Naive thymus-derived CD4-positive, alpha-beta T cell (primary cell): ENCODE measurements at regions of chr4 and their contacts with region 1.

Region 1: DNA sequence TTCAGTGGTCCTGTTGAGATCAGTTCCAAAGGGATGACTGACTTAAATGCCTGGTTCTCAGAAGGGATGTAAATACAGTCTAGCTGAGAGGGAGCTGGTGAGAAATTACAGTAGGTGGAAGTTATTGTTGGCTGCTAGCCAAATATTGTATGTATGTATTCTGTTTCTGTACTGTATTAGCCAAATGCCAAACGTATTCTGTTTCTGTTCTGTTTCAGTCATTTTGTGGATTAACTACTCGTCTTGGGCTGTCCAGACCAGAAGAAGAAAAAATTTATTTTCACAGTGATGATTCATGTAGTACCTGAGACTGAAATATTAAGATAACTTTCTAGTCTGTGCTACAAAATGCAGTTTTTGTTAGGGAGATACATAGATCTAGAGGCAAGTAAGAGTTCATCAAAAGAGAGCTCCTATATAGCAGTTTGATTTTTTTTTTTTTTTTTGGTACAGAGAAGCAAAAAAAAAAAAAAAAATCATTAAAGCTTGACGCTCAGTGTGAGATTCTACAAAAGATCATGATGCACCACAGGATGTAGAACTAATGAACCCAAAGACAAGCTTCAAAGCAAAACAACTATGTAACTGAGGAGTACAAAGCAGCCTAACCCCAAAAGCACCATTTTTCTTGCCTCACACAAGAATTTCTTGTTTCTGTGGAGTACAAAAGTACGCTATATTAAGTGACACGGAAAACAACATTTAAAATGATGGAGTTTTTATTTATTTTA is 54.8 kb downstream of the CASP6 start:
- DNase-seq: peak in 7 of 9 donors; percentile 69 to 91 (median 84)
- ATAC-seq: peak; percentile 96
- H3K4me3 ChIP-seq: peak overlapping the region; percentile 41
- H3K4me3 Mint-ChIP-seq: peak overlapping the region in 8 of 10 donors; percentile 59 to 88 (median 82)
- H3K27ac ChIP-seq: peak overlapping the region; percentile 81
- H3K27ac Mint-ChIP-seq: peak overlapping the region in 5 of 9 donors; percentile 92 to 100 (median 97)
- H3K4me1 ChIP-seq: peaks cover 68 to 70% of the 10 kb centered on the region in 2 donors
- H3K4me1 Mint-ChIP-seq: peaks cover 21 to 43% (median 34%) of the 10 kb centered on the region in 7 donors
- H3K27me3 ChIP-seq: no peaks in the 10 kb centered on the region
- H3K27me3 Mint-ChIP-seq: no peaks in the 10 kb centered on the region

Region 2: DNA sequence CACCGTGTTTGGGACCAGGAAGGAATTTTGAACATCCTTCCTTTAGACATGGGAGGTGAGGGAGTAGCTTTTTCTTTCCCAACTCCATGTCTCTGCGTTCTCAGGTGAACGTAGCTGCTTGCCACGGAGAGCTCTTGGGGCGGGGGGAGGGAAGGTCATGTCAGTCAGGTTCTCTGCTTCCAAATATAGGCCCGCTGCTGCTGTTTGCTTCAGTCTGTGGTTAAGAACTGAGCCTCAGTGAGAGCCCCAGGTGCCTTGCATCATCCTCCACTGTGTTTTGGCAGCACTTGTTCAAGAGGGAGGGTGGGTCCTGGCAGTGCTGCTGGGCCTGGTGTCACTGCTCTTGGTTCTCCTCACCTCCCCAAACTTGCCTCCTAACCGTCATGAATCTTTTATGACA is 1612.2 kb before region 1 on chr4:
- CTCF ChIA-PET with region 1: no interaction called
- POLR2A ChIA-PET with region 1: no interaction called
- intact Hi-C with region 1: loop called in 1 of 2 experiments (anchors 1 kb)
- DNase-seq: peak in 8 of 9 donors; percentile 43 to 93 (median 88)
- ATAC-seq: peak; percentile 99
- H3K4me3 ChIP-seq: peak overlapping the region; percentile 41
- H3K4me3 Mint-ChIP-seq: peak overlapping the region; percentile 73 to 87 (median 80)
- H3K27ac ChIP-seq: peak overlapping the region; percentile 78
- H3K27ac Mint-ChIP-seq: peak overlapping the region; percentile 90 to 100 (median 96)
- H3K4me1 ChIP-seq: peaks cover 0 to 55% of the 10 kb centered on the region in 2 donors
- H3K4me1 Mint-ChIP-seq: peaks cover 19 to 81% (median 66%) of the 10 kb centered on the region in 7 donors
- H3K27me3 ChIP-seq: no peaks in the 10 kb centered on the region
- H3K27me3 Mint-ChIP-seq: no peaks in the 10 kb centered on the region

Region 3: GRCh38 chr4:109611045-109611646 is 37.3 kb before region 1 on chr4:
- CTCF ChIA-PET with region 1: no interaction called
- POLR2A ChIA-PET with region 1: no interaction called
- intact Hi-C with region 1: loop called in 1 of 2 experiments (anchors 5 kb)
- DNase-seq: no peak
- ATAC-seq: no peak
- H3K4me3 ChIP-seq: no peak overlapping the region
- H3K4me3 Mint-ChIP-seq: peak overlapping the region in 2 of 10 donors; percentile 42 to 64
- H3K27ac ChIP-seq: no peak overlapping the region
- H3K27ac Mint-ChIP-seq: peak overlapping the region in 2 of 9 donors; percentile 21 to 36
- H3K4me1 ChIP-seq: peaks cover 0 to 12% of the 10 kb centered on the region in 2 donors
- H3K4me1 Mint-ChIP-seq: peaks cover 39 to 96% (median 84%) of the 10 kb centered on the region in 7 donors
- H3K27me3 ChIP-seq: no peaks in the 10 kb centered on the region
- H3K27me3 Mint-ChIP-seq: no peaks in the 10 kb centered on the region

Region 4: GRCh38 chr4:109631532-109632108 is 16.8 kb before region 1 on chr4:
- CTCF ChIA-PET with region 1: interaction called, 5 read pairs
- POLR2A ChIA-PET with region 1: interaction called, 10 read pairs
- intact Hi-C with region 1: loop called in 1 of 2 experiments (anchors 2 kb)
- DNase-seq: no peak
- ATAC-seq: peak; percentile 32
- H3K4me3 ChIP-seq: no peak overlapping the region
- H3K4me3 Mint-ChIP-seq: peak overlapping the region in 9 of 10 donors; percentile 18 to 82 (median 63)
- H3K27ac ChIP-seq: peak overlapping the region; percentile 20
- H3K27ac Mint-ChIP-seq: peak overlapping the region in 8 of 9 donors; percentile 68 to 91 (median 79)
- H3K4me1 ChIP-seq: peaks cover 0 to 25% of the 10 kb centered on the region in 2 donors
- H3K4me1 Mint-ChIP-seq: peaks cover 22 to 96% (median 83%) of the 10 kb centered on the region in 7 donors
- H3K27me3 ChIP-seq: no peaks in the 10 kb centered on the region
- H3K27me3 Mint-ChIP-seq: no peaks in the 10 kb centered on the region

Region 5: DNA sequence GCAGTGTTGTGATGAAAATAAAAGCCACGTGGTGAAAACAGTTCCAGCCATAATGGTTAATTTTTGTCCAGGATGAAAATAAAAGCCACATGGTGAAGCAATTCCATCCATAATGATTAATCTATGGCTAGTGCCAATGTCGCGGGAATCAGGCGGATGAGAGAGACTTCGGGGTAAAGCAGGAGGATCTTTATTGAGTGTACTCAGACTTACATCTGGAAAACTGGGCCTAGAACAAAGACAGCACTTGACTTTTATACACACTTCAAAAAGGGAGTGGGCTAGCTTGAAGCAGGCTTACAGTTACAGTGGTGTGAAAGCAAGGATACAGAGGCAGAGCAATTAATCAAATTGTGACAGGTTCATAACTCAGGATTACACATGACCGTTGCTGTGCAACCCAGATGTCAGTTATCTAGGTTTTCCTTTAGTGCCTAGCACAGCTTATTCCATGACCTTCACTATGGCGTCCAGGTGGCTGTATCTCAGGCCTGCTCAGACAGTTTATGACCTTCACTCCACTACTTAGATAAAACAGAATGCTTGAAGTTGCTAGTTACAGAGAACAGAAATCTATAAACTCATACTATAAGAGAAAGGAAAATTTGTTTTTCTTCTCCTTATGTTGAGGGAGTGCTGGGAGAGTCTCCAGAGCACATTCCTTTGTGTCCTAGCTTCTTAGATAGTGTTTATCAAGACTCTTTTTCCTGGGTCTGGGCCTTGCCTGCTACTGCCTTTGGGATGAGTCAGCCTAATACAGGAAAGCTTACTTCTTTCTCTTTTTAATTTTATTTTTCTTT is 87.3 kb after region 1 on chr4:
- CTCF ChIA-PET with region 1: no interaction called
- POLR2A ChIA-PET with region 1: no interaction called
- intact Hi-C with region 1: no loop called
- DNase-seq: no peak
- ATAC-seq: no peak
- H3K4me3 ChIP-seq: no peak overlapping the region
- H3K4me3 Mint-ChIP-seq: no peak overlapping the region
- H3K27ac ChIP-seq: no peak overlapping the region
- H3K27ac Mint-ChIP-seq: no peak overlapping the region
- H3K4me1 ChIP-seq: no peaks in the 10 kb centered on the region
- H3K4me1 Mint-ChIP-seq: peaks cover 0 to 2% (median 0%) of the 10 kb centered on the region in 7 donors
- H3K27me3 ChIP-seq: peaks cover 0 to 4% of the 10 kb centered on the region in 2 donors
- H3K27me3 Mint-ChIP-seq: peaks cover 0 to 24% (median 0%) of the 10 kb centered on the region in 5 donors